ENCODE measurements at regions of chr20 and their contacts with region 1.

Region 1: GRCh38 chr20:16428112-16428511 is 145.1 kb downstream of the KIF16B start:
- DNase-seq: no peak
- H3K4me3 ChIP-seq: no peak overlapping the region
- H3K27ac ChIP-seq: no peak overlapping the region
- H3K4me1 ChIP-seq: no peaks in the 10 kb centered on the region
- H3K27me3 ChIP-seq: no peaks in the 10 kb centered on the region
- CTCF ChIP-seq: no peak
- EP300 ChIP-seq: no peak
- POLR2A ChIP-seq: no peak

Region 2: DNA sequence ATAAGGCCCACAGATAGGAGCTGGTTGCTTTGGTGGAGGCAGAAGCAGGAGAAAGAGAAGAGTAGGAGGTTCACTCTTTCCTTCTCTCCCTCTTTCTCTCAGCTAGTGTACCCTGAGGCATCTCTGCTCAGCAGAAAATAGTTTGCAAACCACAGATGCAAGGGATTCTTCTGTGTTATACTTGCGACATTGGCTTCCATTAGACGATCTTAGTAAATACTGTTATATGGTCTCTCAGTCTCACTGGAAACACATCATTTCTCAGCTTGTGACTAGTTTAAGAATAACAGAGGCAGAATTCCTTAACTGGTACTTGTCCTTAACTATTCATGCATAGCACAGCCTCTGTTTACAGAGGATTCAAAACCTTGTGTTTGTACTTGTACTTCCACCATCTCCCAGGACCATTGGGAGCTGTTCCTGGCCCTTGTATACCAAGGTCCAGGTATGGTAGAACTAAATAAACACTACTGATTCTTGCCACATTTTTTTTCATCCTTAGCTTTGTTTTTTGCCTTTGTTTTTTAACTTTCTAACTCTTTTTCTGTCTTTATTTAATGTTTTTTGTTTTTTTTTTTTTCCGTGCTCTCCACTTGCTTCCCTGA is 538.3 kb after region 1 on chr20:
- in situ Hi-C with region 1: no loop called
- intact Hi-C with region 1: loop called (anchors 5 kb)
- DNase-seq: no peak
- H3K4me3 ChIP-seq: no peak overlapping the region
- H3K27ac ChIP-seq: no peak overlapping the region
- H3K4me1 ChIP-seq: no peaks in the 10 kb centered on the region
- H3K27me3 ChIP-seq: no peaks in the 10 kb centered on the region
- CTCF ChIP-seq: no peak
- EP300 ChIP-seq: no peak
- POLR2A ChIP-seq: no peak